ENCODE measurements at regions of chr10 and their contacts with region 1.

Region 1: DNA sequence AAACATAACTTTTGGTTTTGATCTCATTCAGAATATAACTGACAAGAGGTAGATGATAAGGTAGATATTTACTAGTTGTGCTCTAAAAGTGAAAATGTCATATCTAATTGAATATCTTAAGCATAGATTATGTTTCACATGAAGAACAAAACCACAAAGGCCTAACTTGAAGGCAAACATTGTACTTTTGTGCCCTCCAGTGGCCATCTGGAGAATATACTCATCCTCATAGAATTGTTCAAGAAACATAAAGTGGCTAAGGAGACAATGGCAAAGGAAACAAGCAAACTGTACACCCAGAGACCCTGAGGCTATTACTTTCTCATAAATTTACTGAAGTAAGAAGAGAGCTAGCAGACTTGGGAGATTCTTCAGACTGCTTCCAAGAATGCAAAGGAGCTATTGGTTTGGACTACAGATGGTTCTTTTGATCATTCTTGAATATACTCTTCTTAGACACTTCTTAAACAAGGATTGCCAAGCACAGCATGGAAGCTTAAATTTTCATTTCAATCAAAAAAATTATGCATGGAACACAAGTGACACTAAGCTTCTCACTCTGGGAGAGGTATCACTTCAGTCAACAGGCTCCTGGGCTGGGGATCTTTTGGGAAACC is 98.2 kb upstream of the DKK1 start:
- DNase-seq: peak in 6 of 9 experiments; percentile 6 to 64 (median 23)
- ATAC-seq: peak; percentile 62
- H3K4me3 ChIP-seq: no peak overlapping the region
- H3K4me3 Mint-ChIP-seq: no peak overlapping the region
- H3K27ac ChIP-seq: no peak overlapping the region
- H3K27ac Mint-ChIP-seq: no peak overlapping the region
- H3K4me1 ChIP-seq: no peaks in the 10 kb centered on the region
- H3K4me1 Mint-ChIP-seq: no peaks in the 10 kb centered on the region
- H3K27me3 ChIP-seq: no peaks in the 10 kb centered on the region
- H3K27me3 Mint-ChIP-seq: no peaks in the 10 kb centered on the region
- CTCF ChIP-seq: peak; percentile 66

Region 2: GRCh38 chr10:50552771-50553535 is 1662.9 kb before region 1 on chr10:
- CTCF ChIA-PET with region 1: no interaction called
- POLR2A ChIA-PET with region 1: no interaction called
- intact Hi-C with region 1: loop called in 1 of 2 experiments (anchors 10 kb)
- DNase-seq: peak in 7 of 9 experiments; percentile 7 to 80 (median 32)
- ATAC-seq: peak; percentile 94
- H3K4me3 ChIP-seq: no peak overlapping the region
- H3K4me3 Mint-ChIP-seq: no peak overlapping the region
- H3K27ac ChIP-seq: no peak overlapping the region
- H3K27ac Mint-ChIP-seq: no peak overlapping the region
- H3K4me1 ChIP-seq: no peaks in the 10 kb centered on the region
- H3K4me1 Mint-ChIP-seq: peaks cover 30% of the 10 kb centered on the region
- H3K27me3 ChIP-seq: no peaks in the 10 kb centered on the region
- H3K27me3 Mint-ChIP-seq: no peaks in the 10 kb centered on the region
- CTCF ChIP-seq: no peak

Region 3: GRCh38 chr10:51001587-51001986 is 1214.3 kb before region 1 on chr10:
- CTCF ChIA-PET with region 1: interaction called, 3 read pairs
- POLR2A ChIA-PET with region 1: no interaction called
- intact Hi-C with region 1: loop called (anchors 1 to 2 kb)
- DNase-seq: peak in 2 of 9 experiments; percentile 21 to 24
- ATAC-seq: no peak
- H3K4me3 ChIP-seq: no peak overlapping the region
- H3K4me3 Mint-ChIP-seq: no peak overlapping the region
- H3K27ac ChIP-seq: no peak overlapping the region
- H3K27ac Mint-ChIP-seq: no peak overlapping the region
- H3K4me1 ChIP-seq: no peaks in the 10 kb centered on the region
- H3K4me1 Mint-ChIP-seq: no peaks in the 10 kb centered on the region
- H3K27me3 ChIP-seq: no peaks in the 10 kb centered on the region
- H3K27me3 Mint-ChIP-seq: peaks cover 6% of the 10 kb centered on the region
- CTCF ChIP-seq: peak; percentile 53

Region 4: GRCh38 chr10:51389415-51390321 is 826.2 kb before region 1 on chr10:
- CTCF ChIA-PET with region 1: no interaction called
- POLR2A ChIA-PET with region 1: no interaction called
- intact Hi-C with region 1: loop called (anchors 2 to 5 kb)
- DNase-seq: peak in 6 of 9 experiments; percentile 19 to 50 (median 34)
- ATAC-seq: no peak
- H3K4me3 ChIP-seq: no peak overlapping the region
- H3K4me3 Mint-ChIP-seq: no peak overlapping the region
- H3K27ac ChIP-seq: no peak overlapping the region
- H3K27ac Mint-ChIP-seq: no peak overlapping the region
- H3K4me1 ChIP-seq: no peaks in the 10 kb centered on the region
- H3K4me1 Mint-ChIP-seq: no peaks in the 10 kb centered on the region
- H3K27me3 ChIP-seq: no peaks in the 10 kb centered on the region
- H3K27me3 Mint-ChIP-seq: no peaks in the 10 kb centered on the region
- CTCF ChIP-seq: peak; percentile 47

Region 5: DNA sequence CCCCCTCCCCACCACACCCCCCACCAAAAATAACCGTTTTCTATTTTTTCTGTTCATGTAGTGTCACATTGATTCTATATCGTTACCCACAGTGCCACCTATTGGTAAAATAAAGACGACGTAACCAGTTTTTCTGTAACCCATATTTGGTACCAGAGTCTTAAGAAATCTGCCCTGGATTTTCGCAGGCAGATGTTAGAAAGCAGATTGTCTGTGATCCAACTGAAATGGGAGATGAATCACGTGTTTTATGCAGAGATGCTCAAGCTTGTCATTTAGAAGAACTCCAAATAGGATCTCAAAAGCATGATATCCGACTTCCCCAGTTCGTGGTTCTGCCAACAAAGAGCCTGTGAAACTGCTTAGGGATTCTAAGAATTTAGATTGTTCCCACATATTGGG is 255.4 kb before region 1 on chr10:
- CTCF ChIA-PET with region 1: no interaction called
- POLR2A ChIA-PET with region 1: no interaction called
- intact Hi-C with region 1: loop called in 1 of 2 experiments (anchors 5 kb)
- DNase-seq: peak in 2 of 9 experiments; percentile 26 to 40
- ATAC-seq: no peak
- H3K4me3 ChIP-seq: no peak overlapping the region
- H3K4me3 Mint-ChIP-seq: no peak overlapping the region
- H3K27ac ChIP-seq: no peak overlapping the region
- H3K27ac Mint-ChIP-seq: no peak overlapping the region
- H3K4me1 ChIP-seq: no peaks in the 10 kb centered on the region
- H3K4me1 Mint-ChIP-seq: no peaks in the 10 kb centered on the region
- H3K27me3 ChIP-seq: no peaks in the 10 kb centered on the region
- H3K27me3 Mint-ChIP-seq: peaks cover 3% of the 10 kb centered on the region
- CTCF ChIP-seq: peak; percentile 64

Measured in CD8-positive, alpha-beta T cell (primary cell).